ENCODE measurements at regions of chr2 and their contacts with region 1.

Region 1: GRCh38 chr2:120620025-120620793 is 115.5 kb upstream of the GLI2 start:
- DNase-seq: peak; percentile 94
- H3K4me3 ChIP-seq: no peak overlapping the region
- H3K27ac ChIP-seq: peak overlapping the region; percentile 91
- H3K4me1 ChIP-seq: peaks cover 18% of the 10 kb centered on the region
- H3K27me3 ChIP-seq: no peaks in the 10 kb centered on the region
- CTCF ChIP-seq: no peak

Region 2: GRCh38 chr2:120320318-120320851 is 299.8 kb before region 1 on chr2:
- CTCF ChIA-PET with region 1: interaction called, 12 read pairs
- dilution Hi-C with region 1: no loop called
- in situ Hi-C with region 1: no loop called
- intact Hi-C with region 1: no loop called
- DNase-seq: peak; percentile 77
- H3K4me3 ChIP-seq: no peak overlapping the region
- H3K27ac ChIP-seq: no peak overlapping the region
- H3K4me1 ChIP-seq: peaks cover 19% of the 10 kb centered on the region
- H3K27me3 ChIP-seq: no peaks in the 10 kb centered on the region
- CTCF ChIP-seq: no peak